ENCODE measurements at regions of chr17 and their contacts with region 1.

Region 1: GRCh38 chr17:16987830-16988601 is 16.1 kb upstream of the TNFRSF13B start:
- DNase-seq: no peak
- H3K4me3 ChIP-seq: no peak overlapping the region
- H3K27ac ChIP-seq: no peak overlapping the region
- H3K4me1 ChIP-seq: no peaks in the 10 kb centered on the region
- H3K27me3 ChIP-seq: no peaks in the 10 kb centered on the region
- CTCF ChIP-seq: no peak
- POLR2A ChIP-seq: no peak

Region 2: DNA sequence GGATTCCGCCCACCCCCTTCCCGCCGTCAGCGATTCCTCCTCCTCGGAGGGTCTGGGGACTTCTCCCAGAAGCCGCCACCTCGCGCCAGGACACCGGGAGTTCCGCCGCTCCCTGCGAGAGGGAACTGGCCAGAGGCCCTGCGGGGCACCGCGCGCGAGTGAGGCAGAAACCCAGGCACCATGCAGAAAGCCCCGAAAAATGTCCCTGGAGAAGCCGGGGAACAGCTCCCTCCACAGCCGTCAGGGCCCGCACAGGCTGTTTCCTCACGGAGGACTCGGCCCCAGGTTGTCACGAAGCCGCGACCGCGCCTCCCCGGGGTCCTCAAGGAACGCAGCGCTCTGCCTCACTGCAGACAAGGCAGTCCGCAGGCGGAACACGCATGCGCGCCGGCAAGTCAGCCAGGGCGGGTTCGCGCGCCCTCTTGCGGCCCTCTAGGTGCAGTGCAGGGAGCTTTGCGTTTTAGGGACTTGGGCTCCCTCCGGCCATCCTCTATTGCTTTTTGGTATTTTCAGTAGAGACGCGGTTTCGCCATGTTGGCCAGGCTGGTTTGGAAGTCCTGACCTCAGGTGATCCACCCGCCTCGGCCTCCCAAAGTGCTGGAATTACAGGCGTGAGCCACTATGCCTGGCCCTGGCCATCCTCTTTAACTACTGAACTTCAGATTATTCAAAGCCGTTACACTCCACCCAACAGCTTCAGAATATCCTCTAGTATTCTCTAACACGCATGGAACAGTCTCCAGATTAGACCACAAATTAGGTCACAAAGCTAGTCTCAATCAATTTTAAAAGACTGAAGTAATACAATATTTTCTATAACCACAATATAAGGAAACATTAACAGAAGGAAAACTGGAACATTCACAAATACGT is 398.7 kb before region 1 on chr17:
- intact Hi-C with region 1: loop called (anchors 10 kb)
- DNase-seq: peak; percentile 85
- H3K4me3 ChIP-seq: peak overlapping the region; percentile 42 to 51
- H3K27ac ChIP-seq: peak overlapping the region; percentile 62 to 71
- H3K4me1 ChIP-seq: no peaks in the 10 kb centered on the region
- H3K27me3 ChIP-seq: no peaks in the 10 kb centered on the region
- CTCF ChIP-seq: peak; percentile 86 to 98 (median 92)
- POLR2A ChIP-seq: peak; percentile 65

Measured in prostate gland (tissue), 2 donors.